CD8-positive, alpha-beta T cell (primary cell): ENCODE measurements at regions of chr18 and their contacts with region 1.

Region 1: DNA sequence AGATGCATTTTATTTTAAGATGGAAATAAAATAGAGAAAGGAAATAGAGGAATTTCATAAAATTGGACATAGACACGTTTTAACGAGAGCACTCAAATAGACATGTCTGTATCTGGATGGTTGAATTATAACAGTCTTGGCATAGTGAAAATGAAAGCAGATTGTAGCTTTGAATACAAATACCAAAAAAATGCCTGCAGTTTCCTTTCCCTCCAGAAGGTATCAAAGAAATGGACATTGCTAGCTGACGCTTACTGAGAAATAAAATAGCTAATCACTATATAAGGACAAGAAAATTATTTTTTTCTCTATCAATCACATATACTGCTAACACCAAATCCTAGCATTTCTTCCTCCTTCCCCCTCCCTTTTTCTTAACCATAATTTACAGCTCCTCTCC is 11.4 kb upstream of the MAPRE2 start:
- DNase-seq: peak in 2 of 9 experiments; percentile 58 to 76
- ATAC-seq: peak; percentile 60
- H3K4me3 ChIP-seq: peak overlapping the region; percentile 48 to 52
- H3K4me3 Mint-ChIP-seq: peak overlapping the region; percentile 76
- H3K27ac ChIP-seq: peak overlapping the region; percentile 84 to 92
- H3K27ac Mint-ChIP-seq: peak overlapping the region; percentile 95
- H3K4me1 ChIP-seq: peaks cover 56% of the 10 kb centered on the region
- H3K4me1 Mint-ChIP-seq: peaks cover 68% of the 10 kb centered on the region
- H3K27me3 ChIP-seq: no peaks in the 10 kb centered on the region
- H3K27me3 Mint-ChIP-seq: no peaks in the 10 kb centered on the region
- CTCF ChIP-seq: peak; percentile 7

Region 2: GRCh38 chr18:35050028-35050546 is 20.3 kb after region 1 on chr18:
- CTCF ChIA-PET with region 1: interaction called, 51 read pairs
- POLR2A ChIA-PET with region 1: interaction called, 5 read pairs
- intact Hi-C with region 1: no loop called
- DNase-seq: peak in 2 of 9 experiments; percentile 27 to 50
- ATAC-seq: peak; percentile 47
- H3K4me3 ChIP-seq: no peak overlapping the region
- H3K4me3 Mint-ChIP-seq: peak overlapping the region; percentile 63
- H3K27ac ChIP-seq: peak overlapping the region in 1 of 2 experiments; percentile 52
- H3K27ac Mint-ChIP-seq: peak overlapping the region; percentile 81
- H3K4me1 ChIP-seq: peaks cover 56% of the 10 kb centered on the region
- H3K4me1 Mint-ChIP-seq: peaks cover 85% of the 10 kb centered on the region
- H3K27me3 ChIP-seq: no peaks in the 10 kb centered on the region
- H3K27me3 Mint-ChIP-seq: no peaks in the 10 kb centered on the region
- CTCF ChIP-seq: no peak

Region 3: GRCh38 chr18:35136248-35136647 is 106.5 kb after region 1 on chr18:
- CTCF ChIA-PET with region 1: interaction called, 101 read pairs
- POLR2A ChIA-PET with region 1: interaction called, 4 read pairs
- intact Hi-C with region 1: no loop called
- DNase-seq: no peak
- ATAC-seq: no peak
- H3K4me3 ChIP-seq: no peak overlapping the region
- H3K4me3 Mint-ChIP-seq: no peak overlapping the region
- H3K27ac ChIP-seq: no peak overlapping the region
- H3K27ac Mint-ChIP-seq: no peak overlapping the region
- H3K4me1 ChIP-seq: no peaks in the 10 kb centered on the region
- H3K4me1 Mint-ChIP-seq: peaks cover 3% of the 10 kb centered on the region
- H3K27me3 ChIP-seq: no peaks in the 10 kb centered on the region
- H3K27me3 Mint-ChIP-seq: no peaks in the 10 kb centered on the region
- CTCF ChIP-seq: no peak

Region 4: GRCh38 chr18:35240664-35241447 is 211.1 kb after region 1 on chr18 and contains the start of gene ZNF397:
- CTCF ChIA-PET with region 1: interaction called, 5 read pairs
- POLR2A ChIA-PET with region 1: interaction called, 7 read pairs
- intact Hi-C with region 1: loop called in 1 of 2 experiments (anchors 5 kb)
- DNase-seq: peak; percentile 85 to 97 (median 96)
- ATAC-seq: peak; percentile 96
- H3K4me3 ChIP-seq: peak within 1 kb of the TSS; percentile 87 to 96
- H3K4me3 Mint-ChIP-seq: peak within 1 kb of the TSS; percentile 96
- H3K27ac ChIP-seq: peak within 1 kb of the TSS; percentile 94 to 98
- H3K27ac Mint-ChIP-seq: peak within 1 kb of the TSS; percentile 97
- H3K4me1 ChIP-seq: peaks cover 18% of the 10 kb centered on the region
- H3K4me1 Mint-ChIP-seq: peaks cover 39% of the 10 kb centered on the region
- H3K27me3 ChIP-seq: no peaks in the 10 kb centered on the region
- H3K27me3 Mint-ChIP-seq: no peaks in the 10 kb centered on the region
- CTCF ChIP-seq: no peak
- total RNA-seq, gene ZNF397: 6.7 to 6.8 TPM

Region 5: GRCh38 chr18:35355140-35355618 is 325.4 kb after region 1 on chr18:
- CTCF ChIA-PET with region 1: interaction called, 13 read pairs
- POLR2A ChIA-PET with region 1: no interaction called
- intact Hi-C with region 1: loop called (anchors 1 to 5 kb)
- DNase-seq: peak; percentile 19 to 83 (median 59)
- ATAC-seq: peak; percentile 98
- H3K4me3 ChIP-seq: no peak overlapping the region
- H3K4me3 Mint-ChIP-seq: no peak overlapping the region
- H3K27ac ChIP-seq: no peak overlapping the region
- H3K27ac Mint-ChIP-seq: no peak overlapping the region
- H3K4me1 ChIP-seq: no peaks in the 10 kb centered on the region
- H3K4me1 Mint-ChIP-seq: peaks cover 4% of the 10 kb centered on the region
- H3K27me3 ChIP-seq: no peaks in the 10 kb centered on the region
- H3K27me3 Mint-ChIP-seq: peaks cover 2% of the 10 kb centered on the region
- CTCF ChIP-seq: peak; percentile 50